Posterior vena cava (tissue), 2 donors: ENCODE measurements at regions of chr3 and their contacts with region 1.

Region 1: DNA sequence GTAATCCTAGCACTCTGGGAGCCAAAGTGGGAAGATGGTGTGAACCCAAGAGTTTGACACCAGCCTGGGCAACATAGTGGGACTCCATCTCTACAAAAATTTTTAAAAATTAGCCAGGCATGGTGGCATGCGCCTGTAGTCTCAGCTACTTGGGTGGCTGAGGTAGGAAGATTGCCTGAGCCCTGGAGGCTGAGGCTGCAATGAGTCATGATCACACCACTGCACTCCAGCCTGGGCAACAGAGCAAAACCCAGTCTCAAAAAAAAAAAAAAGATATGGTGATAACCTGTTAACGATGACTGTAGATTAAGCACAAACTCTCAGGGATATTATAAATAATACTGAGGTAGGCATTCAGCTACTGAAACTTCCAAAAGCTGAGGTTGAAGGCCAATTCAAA is 107.5 kb downstream of the SLC49A4 start:
- DNase-seq: no peak

Region 2: GRCh38 chr3:122882361-122882947 is 19.9 kb before region 1 on chr3:
- intact Hi-C with region 1: loop called in 1 of 2 experiments (anchors 1 kb)
- DNase-seq: no peak

Region 3: GRCh38 chr3:123113889-123114450 is 211.6 kb after region 1 on chr3:
- intact Hi-C with region 1: no loop called
- DNase-seq: no peak